ENCODE measurements at regions of chr19 and their contacts with region 1.

Region 1: GRCh38 chr19:35468637-35469036 is 20.6 kb downstream of the FFAR2 start:
- DNase-seq: peak; percentile 72 to 82
- ATAC-seq: peak; percentile 99
- H3K4me3 ChIP-seq: no peak overlapping the region
- H3K27ac ChIP-seq: no peak overlapping the region
- H3K4me1 ChIP-seq: no peaks in the 10 kb centered on the region
- CTCF ChIP-seq: peak; percentile 74
- EP300 ChIP-seq: no peak
- POLR2A ChIP-seq: no peak
- RAD21 ChIP-seq: peak; percentile 80 to 85

Region 2: GRCh38 chr19:35269421-35270117 is 199.1 kb before region 1 on chr19:
- CTCF ChIA-PET with region 1: interaction called, 14 read pairs
- POLR2A ChIA-PET with region 1: interaction called, 4 read pairs
- DNase-seq: peak; percentile 92 to 97
- ATAC-seq: peak; percentile 70 to 83
- H3K4me3 ChIP-seq: peak overlapping the region; percentile 81
- H3K27ac ChIP-seq: peak overlapping the region; percentile 97 to 99
- H3K4me1 ChIP-seq: peaks cover 14% of the 10 kb centered on the region
- CTCF ChIP-seq: peak; percentile 100
- EP300 ChIP-seq: no peak
- POLR2A ChIP-seq: no peak; the same call in none of the 2 replicates
- RAD21 ChIP-seq: peak; percentile 65 to 89

Region 3: DNA sequence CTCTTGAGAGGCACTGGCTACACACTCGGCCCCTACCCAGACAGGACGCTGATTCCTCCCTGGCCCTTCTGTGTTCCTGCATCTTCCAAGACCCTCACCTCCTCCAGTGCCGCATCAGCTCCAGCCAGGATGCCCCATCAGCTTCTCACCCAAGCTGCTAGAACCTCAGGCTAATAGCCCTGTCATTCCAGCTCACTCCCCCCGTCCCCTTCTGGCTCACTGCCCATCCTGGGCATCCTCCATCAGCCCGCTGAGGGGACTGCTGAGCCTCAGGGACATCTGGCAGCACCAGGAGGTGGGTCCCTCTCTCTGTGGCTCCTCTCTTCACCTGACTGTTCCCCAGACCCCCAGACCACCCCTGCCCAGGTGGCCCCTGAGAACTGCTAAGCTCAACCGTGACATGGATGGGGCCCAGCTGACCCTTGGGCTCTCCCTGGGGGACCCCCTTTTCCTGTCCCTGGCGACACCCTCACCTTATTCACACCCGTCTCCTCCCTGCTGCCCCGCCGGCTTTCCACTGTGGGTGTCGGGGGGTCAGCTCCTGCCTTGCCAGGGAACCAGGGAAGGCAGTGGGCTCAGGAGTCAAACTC is 105.5 kb before region 1 on chr19:
- CTCF ChIA-PET with region 1: interaction called, 368 read pairs
- POLR2A ChIA-PET with region 1: no interaction called
- DNase-seq: no peak
- ATAC-seq: peak in 1 of 2 experiments; percentile 9; a peak in 3 of 6 replicates
- H3K4me3 ChIP-seq: no peak overlapping the region
- H3K27ac ChIP-seq: no peak overlapping the region
- H3K4me1 ChIP-seq: no peaks in the 10 kb centered on the region
- CTCF ChIP-seq: no peak
- EP300 ChIP-seq: no peak
- POLR2A ChIP-seq: no peak
- RAD21 ChIP-seq: no peak

Region 4: GRCh38 chr19:35449053-35449687 is 19.5 kb before region 1 on chr19:
- CTCF ChIA-PET with region 1: interaction called, 67 read pairs
- POLR2A ChIA-PET with region 1: no interaction called
- DNase-seq: no peak
- ATAC-seq: peak; percentile 10 to 41; a peak in 3 of 6 replicates
- H3K4me3 ChIP-seq: no peak overlapping the region
- H3K27ac ChIP-seq: no peak overlapping the region
- H3K4me1 ChIP-seq: no peaks in the 10 kb centered on the region
- CTCF ChIP-seq: no peak
- EP300 ChIP-seq: no peak
- POLR2A ChIP-seq: no peak
- RAD21 ChIP-seq: no peak

Region 5: GRCh38 chr19:35478803-35479601 is 10.4 kb after region 1 on chr19:
- CTCF ChIA-PET with region 1: interaction called, 30 read pairs
- POLR2A ChIA-PET with region 1: no interaction called
- DNase-seq: no peak
- ATAC-seq: 0 out of 6 replicates have a peak, but pooled peaks of 1 of the 2 experiments have one; percentile 36
- H3K4me3 ChIP-seq: no peak overlapping the region
- H3K27ac ChIP-seq: no peak overlapping the region
- H3K4me1 ChIP-seq: no peaks in the 10 kb centered on the region
- CTCF ChIP-seq: no peak
- EP300 ChIP-seq: no peak
- POLR2A ChIP-seq: no peak
- RAD21 ChIP-seq: no peak

Region 6: GRCh38 chr19:35484252-35485036 is 15.8 kb after region 1 on chr19:
- CTCF ChIA-PET with region 1: interaction called, 30 read pairs
- POLR2A ChIA-PET with region 1: no interaction called
- DNase-seq: no peak
- ATAC-seq: no peak
- H3K4me3 ChIP-seq: no peak overlapping the region
- H3K27ac ChIP-seq: no peak overlapping the region
- H3K4me1 ChIP-seq: no peaks in the 10 kb centered on the region
- CTCF ChIP-seq: no peak
- EP300 ChIP-seq: no peak
- POLR2A ChIP-seq: no peak
- RAD21 ChIP-seq: no peak

Measured in A549 (cell line).